Calu3 (cell line): ENCODE measurements at regions of chr18 and their contacts with region 1.

Region 1: GRCh38 chr18:839224-840022 is 27.4 kb upstream of the YES1 start:
- DNase-seq: peak; percentile 91
- H3K4me3 Mint-ChIP-seq: no peak overlapping the region
- H3K27ac Mint-ChIP-seq: no peak overlapping the region
- H3K4me1 Mint-ChIP-seq: no peaks in the 10 kb centered on the region
- H3K27me3 Mint-ChIP-seq: no peaks in the 10 kb centered on the region
- CTCF ChIP-seq: peak; percentile 97

Region 2: GRCh38 chr18:623761-624620 is 215.4 kb before region 1 on chr18:
- CTCF ChIA-PET with region 1: interaction called, 23 read pairs
- intact Hi-C with region 1: loop called (anchors 2 kb)
- DNase-seq: peak; percentile 84
- H3K4me3 Mint-ChIP-seq: no peak overlapping the region
- H3K27ac Mint-ChIP-seq: no peak overlapping the region
- H3K4me1 Mint-ChIP-seq: no peaks in the 10 kb centered on the region
- H3K27me3 Mint-ChIP-seq: no peaks in the 10 kb centered on the region
- CTCF ChIP-seq: peak; percentile 67

Region 3: DNA sequence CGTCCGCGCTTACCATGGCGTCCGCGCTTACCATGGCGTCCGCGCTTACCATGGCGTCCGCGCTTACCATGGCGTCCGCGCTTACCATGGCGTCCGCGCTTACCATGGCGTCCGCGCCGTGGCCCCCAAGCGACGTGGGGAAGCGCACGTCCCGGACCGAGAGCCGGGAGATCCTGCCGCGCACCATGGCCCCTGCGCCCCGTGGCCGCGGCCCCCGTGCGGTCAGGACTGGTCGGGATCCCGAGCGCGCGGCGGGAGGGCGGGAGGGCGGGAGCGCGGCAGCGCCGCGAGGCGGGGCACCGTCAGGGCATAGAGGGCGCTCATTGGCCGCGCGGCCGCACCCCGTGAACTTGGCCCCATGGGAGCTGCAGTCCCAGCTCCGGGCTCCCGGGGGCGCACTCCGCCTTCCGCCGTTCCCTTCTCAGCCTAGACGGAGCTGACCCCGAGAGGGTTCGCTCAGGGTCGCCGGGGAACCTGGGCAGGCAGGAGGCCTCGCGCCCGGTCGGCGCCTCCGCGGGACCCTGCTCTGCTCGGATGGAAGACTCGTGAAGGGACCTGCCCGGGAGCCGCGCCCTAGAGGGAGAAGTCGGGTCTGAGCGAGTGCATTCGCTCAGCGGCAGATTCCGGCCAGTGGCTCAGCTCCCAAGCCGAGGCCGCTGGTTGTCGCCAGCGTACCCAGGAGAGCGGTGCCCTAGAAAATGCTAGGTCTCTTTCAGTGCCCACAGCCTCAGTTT is 126.9 kb before region 1 on chr18 and contains the start of gene ENOSF1:
- CTCF ChIA-PET with region 1: interaction called, 16 read pairs
- intact Hi-C with region 1: no loop called
- DNase-seq: peak; percentile 96
- H3K4me3 Mint-ChIP-seq: peak within 1 kb of the TSS; percentile 68
- H3K27ac Mint-ChIP-seq: peak within 1 kb of the TSS; percentile 32
- H3K4me1 Mint-ChIP-seq: peaks cover 13% of the 10 kb centered on the region
- H3K27me3 Mint-ChIP-seq: no peaks in the 10 kb centered on the region
- CTCF ChIP-seq: peak; percentile 91
- total RNA-seq, gene ENOSF1: 88.5 and 102 TPM in 2 replicates

Region 4: GRCh38 chr18:741931-742512 is 97.4 kb before region 1 on chr18:
- CTCF ChIA-PET with region 1: interaction called, 3 read pairs
- intact Hi-C with region 1: loop called (anchors 2 kb)
- DNase-seq: no peak
- H3K4me3 Mint-ChIP-seq: no peak overlapping the region
- H3K27ac Mint-ChIP-seq: no peak overlapping the region
- H3K4me1 Mint-ChIP-seq: no peaks in the 10 kb centered on the region
- H3K27me3 Mint-ChIP-seq: no peaks in the 10 kb centered on the region
- CTCF ChIP-seq: peak; percentile 63

Region 5: DNA sequence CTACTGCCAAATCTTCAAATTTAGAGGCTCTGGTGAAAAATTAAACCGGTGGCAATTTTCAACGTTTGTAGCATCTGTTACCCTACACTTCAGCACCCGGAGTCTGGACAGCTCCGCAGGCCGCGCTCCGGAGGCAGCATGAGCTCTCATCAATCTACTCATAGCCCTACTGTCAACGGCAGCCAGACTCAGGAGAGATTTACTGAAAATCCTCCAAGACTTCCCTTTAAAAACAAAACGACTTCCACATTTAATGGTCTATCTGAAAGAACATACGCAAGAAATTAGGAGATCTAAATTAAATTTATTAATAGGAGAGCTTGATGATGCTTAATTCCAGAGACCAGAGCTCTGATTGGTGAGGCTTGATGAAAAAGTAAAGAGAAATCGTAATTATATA is 64.3 kb after region 1 on chr18:
- CTCF ChIA-PET with region 1: no interaction called
- intact Hi-C with region 1: no loop called
- DNase-seq: peak; percentile 50
- H3K4me3 Mint-ChIP-seq: no peak overlapping the region
- H3K27ac Mint-ChIP-seq: no peak overlapping the region
- H3K4me1 Mint-ChIP-seq: no peaks in the 10 kb centered on the region
- H3K27me3 Mint-ChIP-seq: peaks cover 74% of the 10 kb centered on the region
- CTCF ChIP-seq: no peak

Region 6: GRCh38 chr18:2641638-2642037 is 1802.2 kb after region 1 on chr18:
- CTCF ChIA-PET with region 1: no interaction called
- intact Hi-C with region 1: loop called (anchors 10 kb)
- DNase-seq: no peak
- H3K4me3 Mint-ChIP-seq: no peak overlapping the region
- H3K27ac Mint-ChIP-seq: no peak overlapping the region
- H3K4me1 Mint-ChIP-seq: peaks cover 15% of the 10 kb centered on the region
- H3K27me3 Mint-ChIP-seq: no peaks in the 10 kb centered on the region
- CTCF ChIP-seq: no peak